Aorta (tissue), 5 donors: ENCODE measurements at regions of chr10 and their contacts with region 1.

Region 1: GRCh38 chr10:74081192-74081803 is 69.3 kb downstream of the AP3M1 start:
- DNase-seq: no peak
- ATAC-seq: peak; percentile 66
- H3K4me3 ChIP-seq: no peak overlapping the region
- H3K27ac ChIP-seq: no peak overlapping the region
- H3K4me1 ChIP-seq: peaks cover 0 to 5% of the 10 kb centered on the region in 2 donors
- H3K27me3 ChIP-seq: no peaks in the 10 kb centered on the region

Region 2: DNA sequence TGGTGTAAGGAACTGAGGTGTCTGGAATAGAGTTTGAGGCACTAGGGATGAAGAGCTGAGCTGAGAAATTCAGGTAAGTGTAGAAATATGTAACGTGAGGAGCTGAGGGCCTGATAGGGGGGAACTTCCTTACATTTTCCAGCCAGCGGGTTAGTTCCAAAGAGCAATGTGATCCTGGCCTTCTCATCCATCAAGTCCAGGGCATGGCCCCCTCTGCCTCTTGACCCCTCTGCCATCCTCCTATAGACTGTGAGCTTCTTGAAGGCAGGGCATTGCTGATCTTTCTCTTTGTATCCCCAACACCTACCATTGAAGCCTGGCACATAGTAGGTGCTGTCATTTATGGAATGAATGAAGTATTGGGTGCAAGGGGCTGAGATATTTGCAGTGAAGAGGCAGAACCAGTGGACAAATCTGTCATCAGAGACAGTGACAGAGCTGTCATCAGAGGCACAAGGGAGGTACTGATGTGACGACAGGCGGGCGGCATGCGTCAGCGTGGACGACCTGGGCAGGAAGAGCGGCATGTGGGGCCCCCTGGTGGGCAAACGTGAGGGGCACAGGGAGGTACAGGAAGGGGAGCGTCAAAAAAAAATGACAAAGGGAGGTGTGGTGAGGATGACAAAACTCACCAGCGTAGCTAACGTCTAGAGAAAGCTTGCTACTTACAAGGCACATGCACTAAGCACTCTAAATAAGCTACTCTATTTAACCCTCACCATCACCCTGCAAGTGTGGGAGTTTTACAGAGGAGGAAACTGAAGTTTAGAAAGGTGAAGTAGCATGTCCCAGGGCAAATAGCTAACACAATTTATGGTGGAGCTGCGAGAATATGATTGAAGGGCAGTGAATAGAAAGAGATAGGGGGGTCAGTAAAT is 201.8 kb before region 1 on chr10:
- intact Hi-C with region 1: loop called in 1 of 2 experiments (anchors 10 kb)
- DNase-seq: peak; percentile 93 to 97
- ATAC-seq: peak; percentile 92
- H3K4me3 ChIP-seq: no peak overlapping the region
- H3K27ac ChIP-seq: peak overlapping the region in 1 of 2 donors; percentile 14
- H3K4me1 ChIP-seq: peaks cover 2% of the 10 kb centered on the region in 2 donors
- H3K27me3 ChIP-seq: no peaks in the 10 kb centered on the region

Region 3: DNA sequence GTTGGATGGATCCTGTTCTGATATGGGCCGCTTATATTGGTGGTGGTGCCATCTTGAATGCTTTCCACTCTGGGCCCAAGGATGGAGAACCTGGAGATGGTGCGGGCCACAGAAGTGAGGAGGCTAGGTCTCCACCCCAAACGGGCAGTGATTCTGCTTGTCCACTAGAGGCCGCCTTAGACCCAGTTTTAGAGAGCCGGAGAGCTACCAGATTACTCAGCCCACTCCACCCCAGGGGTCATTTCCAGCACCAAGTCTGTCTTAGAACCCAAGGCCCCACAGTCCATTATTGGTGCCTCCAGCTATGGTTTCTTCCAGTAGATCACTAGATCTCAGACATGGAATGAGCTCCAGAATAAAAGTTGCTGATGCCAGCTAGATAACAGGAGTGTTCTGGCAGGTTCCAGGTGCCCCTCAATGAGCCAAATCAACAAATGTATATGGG is 195.2 kb before region 1 on chr10:
- intact Hi-C with region 1: loop called (anchors 5 to 10 kb)
- DNase-seq: peak; percentile 85
- ATAC-seq: peak; percentile 90
- H3K4me3 ChIP-seq: no peak overlapping the region
- H3K27ac ChIP-seq: peak overlapping the region; percentile 92 to 93
- H3K4me1 ChIP-seq: peaks cover 2 to 4% of the 10 kb centered on the region in 2 donors
- H3K27me3 ChIP-seq: no peaks in the 10 kb centered on the region

Region 4: GRCh38 chr10:73997787-73998622 is 83.3 kb before region 1 on chr10 and contains the start of gene VCL:
- intact Hi-C with region 1: loop called in 1 of 2 experiments (anchors 2 kb)
- DNase-seq: peak; percentile 98 to 99
- ATAC-seq: peak; percentile 98
- H3K4me3 ChIP-seq: peak within 1 kb of the TSS; percentile 86 to 95
- H3K27ac ChIP-seq: peak within 1 kb of the TSS; percentile 85 to 86
- H3K4me1 ChIP-seq: no peaks in the 10 kb centered on the region
- H3K27me3 ChIP-seq: no peaks in the 10 kb centered on the region
- total RNA-seq, gene VCL: 312 to 499 TPM

Region 5: DNA sequence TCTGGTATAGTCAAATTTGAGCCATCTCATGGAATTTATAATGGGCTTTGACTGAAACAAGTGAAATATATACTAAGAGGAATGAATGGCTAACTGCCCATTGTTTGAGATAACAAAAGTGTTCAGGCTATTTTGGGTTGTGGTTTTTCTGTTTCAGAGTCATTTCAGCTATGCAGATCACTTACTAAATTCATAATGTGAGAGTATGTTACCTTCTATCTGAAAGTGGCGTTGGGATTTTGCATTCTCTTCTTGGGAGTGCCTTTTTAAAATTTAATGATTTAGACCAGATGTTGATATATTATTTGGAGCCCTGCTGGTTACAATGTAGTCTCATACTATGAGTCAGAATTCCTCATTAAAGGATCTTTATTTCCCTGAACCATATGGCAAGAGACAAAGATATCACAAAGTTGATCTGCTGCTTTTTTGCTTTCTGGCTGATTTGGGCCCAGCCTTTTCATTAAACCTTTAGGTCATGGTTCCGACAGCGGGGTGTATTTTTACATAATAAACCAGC is 73.0 kb before region 1 on chr10:
- intact Hi-C with region 1: loop called in 1 of 2 experiments (anchors 5 kb)
- DNase-seq: no peak
- ATAC-seq: no peak
- H3K4me3 ChIP-seq: peak overlapping the region in 1 of 2 donors; percentile 34
- H3K27ac ChIP-seq: peak overlapping the region in 1 of 2 donors; percentile 57
- H3K4me1 ChIP-seq: peaks cover 6 to 8% of the 10 kb centered on the region in 2 donors
- H3K27me3 ChIP-seq: no peaks in the 10 kb centered on the region

Region 6: DNA sequence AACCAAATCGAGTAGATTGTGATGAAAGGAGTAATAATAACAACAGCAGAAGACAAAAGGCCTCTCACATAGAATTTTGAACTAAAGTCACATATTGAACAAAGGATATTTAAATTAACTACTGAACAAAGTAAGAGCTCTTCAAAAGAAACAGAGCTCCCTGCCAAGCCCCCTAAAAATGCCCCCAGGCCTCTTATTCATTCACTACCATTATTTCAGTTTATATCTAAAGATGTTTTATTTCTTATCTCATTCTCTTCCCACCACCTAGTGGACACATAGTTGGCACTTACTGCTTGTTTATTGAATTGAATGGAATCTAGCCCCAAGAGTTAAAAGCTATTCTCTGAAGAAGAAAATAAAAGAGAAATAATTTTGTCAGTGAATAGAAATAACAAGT is 46.0 kb before region 1 on chr10:
- intact Hi-C with region 1: loop called in 1 of 2 experiments (anchors 5 kb)
- DNase-seq: no peak
- ATAC-seq: no peak
- H3K4me3 ChIP-seq: no peak overlapping the region
- H3K27ac ChIP-seq: no peak overlapping the region
- H3K4me1 ChIP-seq: peaks cover 2 to 10% of the 10 kb centered on the region in 2 donors
- H3K27me3 ChIP-seq: no peaks in the 10 kb centered on the region